ENCODE measurements at regions of chr4 and their contacts with region 1.

Region 1: DNA sequence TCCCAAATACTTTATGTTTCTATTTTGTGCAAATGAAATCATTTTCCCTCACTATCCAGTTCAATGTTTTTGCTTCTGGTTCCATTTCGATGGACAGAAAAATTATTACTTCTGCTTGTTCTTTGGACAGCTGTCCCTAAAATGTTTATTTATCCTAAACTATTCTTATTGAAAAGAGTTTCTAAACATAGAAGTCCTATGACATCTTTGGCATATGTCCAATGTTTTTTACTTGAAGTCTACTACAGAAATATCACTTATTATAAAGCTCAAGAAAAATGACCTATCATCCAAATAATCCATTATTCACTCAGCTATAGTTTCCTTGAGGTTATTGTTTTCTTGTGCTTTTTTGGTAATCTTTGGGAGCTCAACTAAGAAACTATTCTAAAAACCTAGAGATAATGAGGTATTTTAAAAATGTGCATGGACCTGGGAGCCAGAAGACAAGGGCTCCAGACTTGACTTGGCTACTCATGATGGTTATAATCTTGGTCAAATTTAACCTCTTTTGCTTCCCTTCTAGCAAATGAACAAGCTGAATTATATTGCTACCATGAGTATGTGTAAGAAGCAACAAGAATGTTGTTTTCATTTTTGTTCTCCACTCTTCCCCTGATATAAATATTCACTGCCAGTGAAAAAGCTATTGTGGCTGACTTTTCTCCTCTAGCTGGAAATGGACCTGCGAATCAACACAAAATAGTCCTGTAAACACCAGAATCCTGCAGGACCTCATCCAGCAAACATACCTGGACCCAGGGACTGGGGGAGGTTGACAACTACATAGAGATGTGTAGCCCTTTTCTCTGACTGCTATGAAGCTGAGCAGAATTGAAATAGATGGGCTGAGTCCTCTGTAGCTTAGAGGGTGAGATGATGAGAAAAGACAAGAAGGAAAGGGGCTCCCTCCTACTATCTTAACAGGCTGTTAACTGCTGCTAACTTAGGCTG is 137.4 kb downstream of the FRYL start:
- DNase-seq: no peak
- CTCF ChIP-seq: no peak

Region 2: DNA sequence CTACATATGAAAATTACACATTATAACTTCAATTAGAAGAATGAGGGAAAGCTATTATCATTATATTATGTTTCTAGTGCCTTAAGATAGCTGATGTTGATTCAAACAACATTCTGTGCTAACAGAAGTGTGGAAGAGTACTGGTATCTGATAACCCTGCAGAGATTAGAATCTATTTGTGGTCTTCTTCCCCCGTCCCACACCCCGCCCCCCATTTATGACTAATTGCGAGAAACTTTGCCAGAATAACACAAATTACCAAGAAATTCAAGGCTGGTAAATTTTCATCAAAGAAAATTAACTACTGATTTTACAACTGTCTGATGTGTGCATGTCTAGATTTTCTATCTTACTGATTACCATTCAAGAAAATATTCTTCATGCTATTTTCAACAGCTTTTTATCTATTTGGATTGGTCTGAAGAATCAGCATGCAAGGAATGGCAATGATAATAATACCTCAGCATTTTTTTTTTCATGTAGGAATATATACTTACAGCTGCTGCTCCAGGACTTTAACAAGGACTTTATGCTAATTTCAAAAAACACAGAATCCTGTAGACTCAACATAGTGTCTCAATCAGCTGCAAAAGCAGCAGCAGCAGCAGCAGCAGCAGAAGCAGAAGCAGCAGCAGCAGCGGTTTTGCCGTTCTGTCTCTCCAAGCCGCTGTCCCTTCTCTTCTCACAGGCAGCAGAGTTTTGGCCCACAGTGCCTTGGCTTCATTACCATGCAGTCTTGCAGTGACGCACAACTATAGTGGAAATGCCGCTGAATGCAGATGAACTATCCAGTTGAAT is 10.7 kb after region 1 on chr4:
- CTCF ChIA-PET with region 1: interaction called, 19 read pairs
- POLR2A ChIA-PET with region 1: no interaction called
- DNase-seq: no peak
- CTCF ChIP-seq: no peak